Activated B cell treated with CpG ODN at 0.5 μM for 24 hours (primary cell): ENCODE measurements at regions of chr22 and their contacts with region 1.

Region 1: GRCh38 chr22:19854778-19855503 is at the starts of genes GNB1L and RTL10:
- DNase-seq: peak; percentile 98
- ATAC-seq: peak; percentile 92
- H3K4me3 Mint-ChIP-seq: peak within 1 kb of the TSS; percentile 91
- H3K27ac Mint-ChIP-seq: peak within 1 kb of the TSS; percentile 88
- H3K4me1 Mint-ChIP-seq: peaks cover 39% of the 10 kb centered on the region
- H3K27me3 Mint-ChIP-seq: no peaks in the 10 kb centered on the region
- CTCF ChIP-seq: no peak
- total RNA-seq, gene GNB1L: 5.8 and 6.3 TPM in 2 replicates
- total RNA-seq, gene RTL10: 9.1 and 12.1 TPM in 2 replicates

Region 2: DNA sequence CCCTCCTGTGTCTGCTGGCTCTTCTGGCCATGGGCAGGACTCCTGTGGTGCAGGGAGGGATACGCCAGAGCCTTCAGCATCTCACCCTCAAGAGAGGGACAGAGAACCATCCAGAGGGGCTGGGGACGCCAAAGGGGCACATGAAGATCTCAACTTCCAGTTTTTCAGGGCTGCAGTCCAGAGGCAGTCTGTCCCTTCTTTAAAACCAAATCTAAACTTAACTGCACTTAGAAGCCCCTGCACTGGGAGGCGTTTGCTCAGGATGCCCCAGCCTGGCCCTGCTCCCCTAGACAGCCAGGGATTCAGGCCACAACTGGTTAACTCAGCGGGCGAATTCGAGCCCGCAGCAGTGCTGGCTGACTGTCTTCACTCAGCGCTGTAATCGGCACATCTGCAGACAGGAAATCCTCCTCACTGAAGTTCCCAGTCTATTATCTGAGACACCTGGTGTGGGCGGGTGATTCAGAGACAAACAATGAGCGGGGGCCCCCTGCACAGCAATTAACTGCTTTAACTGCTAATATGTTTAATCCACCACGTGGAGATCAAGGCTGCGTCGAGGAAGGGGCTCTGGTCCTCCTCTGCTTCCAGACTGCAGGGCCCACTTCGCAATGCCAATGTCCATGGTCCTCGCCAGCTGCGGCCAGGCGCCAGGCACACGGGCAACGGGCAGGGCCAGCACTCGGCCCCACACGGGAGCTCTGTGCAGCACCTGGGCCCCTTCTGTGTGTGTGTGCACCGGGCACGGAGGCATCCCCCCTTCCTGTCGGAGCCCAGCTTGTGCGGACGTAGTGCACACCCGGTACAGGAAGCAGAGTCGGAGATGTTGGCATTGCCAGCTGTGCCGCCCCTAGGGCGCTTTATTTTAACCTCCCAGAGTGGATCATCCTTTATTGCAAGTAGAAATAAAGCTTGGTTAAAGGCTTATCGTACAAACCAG is 36.6 kb after region 1 on chr22:
- CTCF ChIA-PET with region 1: no interaction called
- POLR2A ChIA-PET with region 1: interaction called, 6 read pairs
- intact Hi-C with region 1: loop called (anchors 2 kb)
- DNase-seq: no peak
- ATAC-seq: peak; percentile 78
- H3K4me3 Mint-ChIP-seq: peak overlapping the region; percentile 78
- H3K27ac Mint-ChIP-seq: peak overlapping the region; percentile 81
- H3K4me1 Mint-ChIP-seq: peaks cover 30% of the 10 kb centered on the region
- H3K27me3 Mint-ChIP-seq: no peaks in the 10 kb centered on the region
- CTCF ChIP-seq: no peak